ENCODE measurements at regions of chr15 and their contacts with region 1.

Region 1: GRCh38 chr15:40274350-40275274 is 8.3 kb downstream of the ANKRD63 start:
- DNase-seq: peak; percentile 79 to 94 (median 88)
- ATAC-seq: peak; percentile 91
- H3K4me3 ChIP-seq: no peak overlapping the region
- H3K4me3 Mint-ChIP-seq: no peak overlapping the region
- H3K27ac ChIP-seq: no peak overlapping the region
- H3K27ac Mint-ChIP-seq: no peak overlapping the region
- H3K4me1 ChIP-seq: no peaks in the 10 kb centered on the region
- H3K4me1 Mint-ChIP-seq: peaks cover 5% of the 10 kb centered on the region
- H3K27me3 ChIP-seq: no peaks in the 10 kb centered on the region
- H3K27me3 Mint-ChIP-seq: peaks cover 12% of the 10 kb centered on the region
- CTCF ChIP-seq: peak; percentile 100

Region 2: DNA sequence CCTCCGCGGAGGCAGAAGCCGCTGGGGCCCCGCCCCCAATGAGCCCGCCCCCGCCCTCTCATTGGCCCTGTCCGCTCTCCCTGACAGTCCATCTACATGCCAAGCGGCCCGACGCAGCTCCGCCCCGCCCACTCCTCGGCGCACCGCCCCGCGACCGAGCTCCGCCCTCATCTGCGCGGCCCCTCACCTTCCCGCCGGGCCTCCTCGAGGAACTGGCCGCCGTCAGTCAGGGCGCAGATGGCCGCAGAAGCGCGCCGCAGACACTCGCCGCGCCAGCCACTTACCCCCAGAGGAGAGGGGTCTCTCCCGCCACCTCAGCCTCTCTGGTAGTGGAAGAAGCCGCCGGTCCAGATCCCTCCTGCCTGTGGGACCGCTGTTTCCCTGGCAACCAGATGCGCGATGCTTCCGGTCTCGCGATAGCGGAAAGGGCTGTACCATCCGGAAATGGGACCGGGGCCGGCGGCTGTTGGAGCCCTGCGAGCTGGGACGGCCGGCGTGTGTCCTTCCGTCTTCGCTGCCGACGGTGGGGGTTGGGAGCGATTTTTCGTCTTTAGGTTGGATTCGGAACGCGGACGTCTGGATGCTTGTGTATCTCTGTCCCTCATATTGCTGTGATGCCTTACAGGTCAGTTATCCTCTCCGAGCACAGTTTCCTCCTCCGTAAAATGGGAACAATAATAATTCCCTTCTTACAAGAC is 492.0 kb before region 1 on chr15 and contains the start of gene FSIP1:
- CTCF ChIA-PET with region 1: interaction called, 11 read pairs
- POLR2A ChIA-PET with region 1: no interaction called
- intact Hi-C with region 1: loop called in 1 of 2 experiments (anchors 1 kb)
- DNase-seq: peak; percentile 91 to 97 (median 94)
- ATAC-seq: peak; percentile 98
- H3K4me3 ChIP-seq: peak within 1 kb of the TSS; percentile 71 to 95
- H3K4me3 Mint-ChIP-seq: peak within 1 kb of the TSS; percentile 85
- H3K27ac ChIP-seq: peak within 1 kb of the TSS; percentile 68 to 82
- H3K27ac Mint-ChIP-seq: peak within 1 kb of the TSS; percentile 87
- H3K4me1 ChIP-seq: peaks cover 20% of the 10 kb centered on the region
- H3K4me1 Mint-ChIP-seq: peaks cover 50% of the 10 kb centered on the region
- H3K27me3 ChIP-seq: no peaks in the 10 kb centered on the region
- H3K27me3 Mint-ChIP-seq: no peaks in the 10 kb centered on the region
- CTCF ChIP-seq: no peak
- total RNA-seq, gene FSIP1: 0.22 to 0.64 TPM

Region 3: DNA sequence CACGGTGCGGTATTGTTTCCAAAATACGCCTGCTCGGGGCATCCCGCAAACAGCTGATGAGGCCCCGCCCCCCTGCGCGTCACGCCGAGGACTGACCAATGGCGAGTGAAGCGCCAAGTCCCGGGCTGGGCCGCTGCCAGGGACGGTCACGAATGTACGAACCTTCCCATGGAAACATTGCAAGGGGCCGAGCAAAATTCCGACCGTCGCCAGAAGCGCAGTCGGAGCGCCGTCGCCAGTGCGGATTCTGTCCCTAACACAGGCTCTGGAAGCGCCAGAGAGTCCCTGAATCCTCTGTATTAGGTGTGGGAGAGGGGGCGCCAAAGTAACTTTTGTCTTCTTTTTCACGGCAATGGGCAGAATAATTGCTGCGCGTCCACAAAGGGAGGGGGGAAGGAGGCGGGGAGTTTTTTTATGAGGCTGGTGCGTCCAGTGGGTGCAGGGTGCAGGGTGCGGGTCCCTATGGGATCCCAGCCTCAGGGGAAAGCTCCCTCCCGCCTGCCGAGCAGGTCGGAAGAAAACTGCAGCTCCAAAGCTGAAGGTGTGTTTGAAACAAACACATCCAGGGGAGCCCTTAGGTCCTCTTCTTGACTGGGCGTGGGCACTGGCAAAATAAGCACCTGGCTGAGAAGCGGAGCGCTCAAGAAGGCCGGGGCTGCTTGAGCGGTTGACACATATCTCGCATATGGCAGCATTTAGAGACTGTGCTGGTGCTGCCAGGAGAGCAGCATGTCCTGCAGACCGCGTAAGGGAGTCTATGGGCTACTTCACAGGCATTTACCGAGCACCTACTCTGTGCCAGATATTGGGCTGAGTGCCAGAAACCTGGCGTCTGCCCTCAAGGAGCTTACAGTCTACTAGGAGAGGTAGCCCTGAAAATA is 165.5 kb before region 1 on chr15 and contains the start of gene BMF:
- CTCF ChIA-PET with region 1: interaction called, 7 read pairs
- POLR2A ChIA-PET with region 1: no interaction called
- intact Hi-C with region 1: loop called in 1 of 2 experiments (anchors 1 kb)
- DNase-seq: peak; percentile 89 to 98 (median 96)
- ATAC-seq: peak; percentile 87
- H3K4me3 ChIP-seq: peak within 1 kb of the TSS; percentile 72 to 90
- H3K4me3 Mint-ChIP-seq: peak within 1 kb of the TSS; percentile 92
- H3K27ac ChIP-seq: peak within 1 kb of the TSS; percentile 18 to 26
- H3K27ac Mint-ChIP-seq: peak within 1 kb of the TSS; percentile 60
- H3K4me1 ChIP-seq: peaks cover 30% of the 10 kb centered on the region
- H3K4me1 Mint-ChIP-seq: peaks cover 34% of the 10 kb centered on the region
- H3K27me3 ChIP-seq: no peaks in the 10 kb centered on the region
- H3K27me3 Mint-ChIP-seq: peaks cover 8% of the 10 kb centered on the region
- CTCF ChIP-seq: no peak
- total RNA-seq, gene BMF: 9.6 to 11.2 TPM

Region 4: DNA sequence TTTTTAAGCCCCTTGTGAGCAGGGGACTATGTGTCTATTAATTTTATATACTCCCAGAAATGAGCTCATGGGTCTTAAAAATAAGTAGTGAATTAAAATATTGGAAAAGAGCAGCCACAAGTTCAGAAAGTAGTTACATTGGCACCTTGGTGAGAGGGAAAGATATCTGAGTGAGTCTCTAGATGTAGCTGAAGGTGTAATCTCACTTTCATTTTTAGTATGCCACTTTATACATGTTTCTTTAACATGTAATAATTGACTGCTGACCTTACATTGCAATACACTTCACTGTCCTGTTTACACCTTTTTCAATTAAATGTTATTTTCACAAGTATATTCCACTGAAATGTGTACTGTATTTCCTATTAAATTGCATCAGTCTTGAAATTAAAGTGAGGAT is 47.9 kb before region 1 on chr15:
- CTCF ChIA-PET with region 1: interaction called, 205 read pairs
- POLR2A ChIA-PET with region 1: no interaction called
- intact Hi-C with region 1: no loop called
- DNase-seq: no peak
- ATAC-seq: no peak
- H3K4me3 ChIP-seq: no peak overlapping the region
- H3K4me3 Mint-ChIP-seq: no peak overlapping the region
- H3K27ac ChIP-seq: no peak overlapping the region
- H3K27ac Mint-ChIP-seq: no peak overlapping the region
- H3K4me1 ChIP-seq: no peaks in the 10 kb centered on the region
- H3K4me1 Mint-ChIP-seq: no peaks in the 10 kb centered on the region
- H3K27me3 ChIP-seq: no peaks in the 10 kb centered on the region
- H3K27me3 Mint-ChIP-seq: no peaks in the 10 kb centered on the region
- CTCF ChIP-seq: no peak

Region 5: DNA sequence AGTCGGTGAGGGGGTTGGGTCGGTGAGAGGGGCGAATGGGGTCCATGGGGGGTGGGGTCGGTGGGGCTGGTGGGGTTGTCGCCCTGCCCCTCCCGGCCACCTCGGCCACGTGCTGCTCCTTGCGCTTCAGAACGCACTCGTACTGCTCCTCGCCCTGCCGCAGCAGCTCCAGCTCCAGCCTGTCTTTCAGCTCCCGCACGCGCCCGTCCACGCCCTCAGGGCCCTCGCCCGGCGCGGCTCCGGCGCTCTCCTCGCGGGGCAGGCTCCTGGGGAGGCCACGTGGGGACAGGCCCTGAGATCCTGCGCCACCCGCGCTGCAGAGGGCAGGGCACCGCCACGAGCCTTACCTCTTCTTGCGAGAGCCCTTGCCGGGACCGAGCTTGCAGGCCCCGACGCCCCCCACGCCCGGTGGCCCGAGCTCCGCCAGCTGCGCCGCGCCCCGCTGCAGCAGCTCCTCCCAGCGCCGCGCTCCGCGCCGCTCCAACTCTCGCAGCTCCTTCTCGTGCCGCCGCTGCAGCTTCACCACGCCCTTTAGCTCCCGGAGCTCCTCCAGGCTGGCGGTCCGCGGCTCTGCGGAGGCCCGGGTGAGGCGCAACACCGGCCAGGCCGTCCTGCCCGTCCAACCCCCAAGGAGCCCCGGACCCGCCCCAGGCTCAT is 16.4 kb after region 1 on chr15:
- CTCF ChIA-PET with region 1: interaction called, 119 read pairs
- POLR2A ChIA-PET with region 1: no interaction called
- intact Hi-C with region 1: no loop called
- DNase-seq: no peak
- ATAC-seq: no peak
- H3K4me3 ChIP-seq: no peak overlapping the region
- H3K4me3 Mint-ChIP-seq: no peak overlapping the region
- H3K27ac ChIP-seq: no peak overlapping the region
- H3K27ac Mint-ChIP-seq: no peak overlapping the region
- H3K4me1 ChIP-seq: no peaks in the 10 kb centered on the region
- H3K4me1 Mint-ChIP-seq: no peaks in the 10 kb centered on the region
- H3K27me3 ChIP-seq: no peaks in the 10 kb centered on the region
- H3K27me3 Mint-ChIP-seq: no peaks in the 10 kb centered on the region
- CTCF ChIP-seq: no peak

Region 6: GRCh38 chr15:40367686-40368611 is 93.3 kb after region 1 on chr15:
- CTCF ChIA-PET with region 1: interaction called, 10 read pairs
- POLR2A ChIA-PET with region 1: no interaction called
- intact Hi-C with region 1: no loop called
- DNase-seq: peak; percentile 74 to 96 (median 85)
- ATAC-seq: peak; percentile 95
- H3K4me3 ChIP-seq: peak overlapping the region; percentile 58 to 75
- H3K4me3 Mint-ChIP-seq: peak overlapping the region; percentile 83
- H3K27ac ChIP-seq: peak overlapping the region; percentile 17 to 62
- H3K27ac Mint-ChIP-seq: peak overlapping the region; percentile 84
- H3K4me1 ChIP-seq: peaks cover 23% of the 10 kb centered on the region
- H3K4me1 Mint-ChIP-seq: peaks cover 19% of the 10 kb centered on the region
- H3K27me3 ChIP-seq: no peaks in the 10 kb centered on the region
- H3K27me3 Mint-ChIP-seq: no peaks in the 10 kb centered on the region
- CTCF ChIP-seq: peak; percentile 92

Measured in CD8-positive, alpha-beta T cell (primary cell).